GM18951 (cell line): ENCODE measurements at regions of chr22 and their contacts with region 1.

Region 1: GRCh38 chr22:37817705-37818408 is 5.3 kb upstream of the GALR3 start:
- POLR2A ChIP-seq: no peak

Region 2: DNA sequence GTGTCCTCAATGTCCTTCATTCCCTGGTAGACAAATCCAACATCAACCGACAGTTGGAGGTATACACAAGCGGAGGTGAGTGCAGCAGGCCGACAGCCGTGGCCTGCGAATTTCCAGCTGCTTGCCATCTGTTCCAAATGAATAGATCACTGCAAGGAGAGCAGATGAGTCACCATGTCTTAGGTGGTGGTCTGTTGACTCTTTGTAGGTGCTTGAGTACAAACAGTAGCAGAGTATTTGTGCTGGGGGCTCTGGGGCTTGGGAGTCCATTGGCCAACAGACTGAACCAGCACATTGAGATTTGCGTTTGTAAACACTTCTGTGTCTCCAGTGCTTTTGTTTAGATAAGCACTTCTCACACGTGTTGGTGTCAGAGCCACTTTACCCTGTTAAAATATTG is 52.4 kb after region 1 on chr22:
- in situ Hi-C with region 1: loop called (anchors 10 kb)
- POLR2A ChIP-seq: no peak

Region 3: GRCh38 chr22:37965940-37966664 is 148.2 kb after region 1 on chr22:
- in situ Hi-C with region 1: loop called (anchors 10 kb)
- POLR2A ChIP-seq: no peak

Region 4: GRCh38 chr22:38114484-38115398 is 296.9 kb after region 1 on chr22:
- in situ Hi-C with region 1: no loop called
- POLR2A ChIP-seq: no peak